ENCODE measurements at regions of chr11 and their contacts with region 1.

Region 1: DNA sequence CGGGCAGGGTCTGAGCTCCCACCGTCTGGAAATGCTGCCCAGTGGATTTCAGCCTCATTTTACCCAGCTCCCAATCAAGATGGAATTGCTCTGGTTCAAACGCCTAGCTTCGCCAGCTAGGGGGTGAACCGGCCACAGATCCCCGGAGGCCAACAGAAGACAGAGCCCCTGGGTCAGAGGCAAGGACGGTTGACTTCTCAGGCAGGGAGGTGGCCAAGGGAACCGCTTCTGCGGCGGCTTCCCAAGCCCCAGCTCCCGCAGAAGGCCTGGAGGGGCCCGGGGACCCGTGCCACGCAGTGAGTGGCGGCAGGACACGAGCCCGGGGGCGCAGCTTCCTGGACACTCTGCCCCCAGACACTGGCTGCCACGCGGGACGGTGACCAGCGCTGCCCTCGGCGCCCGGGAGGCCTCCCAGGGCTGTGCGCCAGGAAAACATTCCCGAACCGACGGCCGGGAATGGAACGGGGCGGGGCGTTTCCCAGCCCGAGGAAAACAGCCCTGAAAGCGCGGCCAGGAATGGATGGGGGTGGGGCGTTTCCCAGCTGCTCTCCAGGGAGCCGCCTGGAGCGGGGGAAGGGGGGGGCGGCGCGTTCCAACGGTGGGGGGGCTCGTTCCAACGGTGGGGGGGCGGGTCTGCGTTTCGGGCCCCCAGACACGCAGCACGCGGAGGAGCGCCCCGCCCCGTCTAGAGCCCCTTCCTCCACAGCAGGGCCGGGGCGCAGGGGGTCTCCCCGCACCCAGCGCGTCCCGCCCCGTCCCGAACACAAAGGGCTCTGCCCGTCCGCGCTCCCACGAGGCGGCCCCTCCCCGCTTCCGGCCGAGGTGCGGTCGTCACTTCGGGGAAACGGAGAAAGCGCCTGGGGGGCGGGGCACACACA is 13.5 kb upstream of the B4GALNT4 start:
- DNase-seq: peak; percentile 81 to 93 (median 88)
- ATAC-seq: peak; percentile 65 to 80
- H3K4me3 Mint-ChIP-seq: peak overlapping the region in 8 of 10 donors; percentile 78 to 93 (median 88)
- H3K27ac Mint-ChIP-seq: peak overlapping the region in 9 of 10 donors; percentile 90 to 99 (median 96)
- H3K4me1 Mint-ChIP-seq: peaks cover 21 to 47% (median 41%) of the 10 kb centered on the region in 4 donors
- H3K27me3 Mint-ChIP-seq: no peaks in the 10 kb centered on the region

Region 2: DNA sequence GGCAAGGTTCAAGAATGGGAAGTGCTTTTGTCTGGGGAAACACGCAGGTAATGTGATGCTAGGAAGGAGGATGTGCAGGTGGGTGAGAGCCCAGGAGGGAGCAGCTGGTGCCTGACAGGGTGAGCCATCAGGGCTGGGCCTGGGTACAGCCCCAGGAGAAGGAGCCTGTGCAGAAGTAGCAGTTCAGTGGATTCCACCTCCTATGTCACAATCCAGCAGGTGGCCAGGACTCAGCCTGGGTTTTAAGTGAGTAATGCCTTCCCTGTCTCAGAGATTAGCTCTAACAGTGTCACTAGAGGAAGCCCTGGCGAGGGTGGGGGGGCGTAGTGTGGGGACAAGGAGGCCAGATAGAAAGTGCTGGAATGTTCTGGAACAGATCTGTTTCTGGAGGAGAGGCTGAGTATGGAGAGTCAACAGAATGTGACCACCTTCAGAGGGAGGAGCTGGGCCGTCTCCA is 140.2 kb before region 1 on chr11:
- POLR2A ChIA-PET with region 1: no interaction called
- DNase-seq: no peak
- ATAC-seq: peak in 1 of 2 donors; percentile 33
- H3K4me3 Mint-ChIP-seq: no peak overlapping the region
- H3K27ac Mint-ChIP-seq: peak overlapping the region in 7 of 10 donors; percentile 8 to 84 (median 40)
- H3K4me1 Mint-ChIP-seq: peaks cover 0 to 12% (median 7%) of the 10 kb centered on the region in 4 donors
- H3K27me3 Mint-ChIP-seq: no peaks in the 10 kb centered on the region

Region 3: GRCh38 chr11:269146-269890 is 86.5 kb before region 1 on chr11:
- POLR2A ChIA-PET with region 1: interaction called, 23 read pairs
- DNase-seq: peak in 9 of 10 donors; percentile 49 to 91 (median 74)
- ATAC-seq: peak; percentile 55 to 79
- H3K4me3 Mint-ChIP-seq: peak overlapping the region; percentile 84 to 94 (median 88)
- H3K27ac Mint-ChIP-seq: peak overlapping the region; percentile 96 to 99 (median 98)
- H3K4me1 Mint-ChIP-seq: peaks cover 11 to 42% (median 36%) of the 10 kb centered on the region in 4 donors
- H3K27me3 Mint-ChIP-seq: no peaks in the 10 kb centered on the region

Region 4: GRCh38 chr11:288328-289144 is 67.3 kb before region 1 on chr11 and contains the start of gene PGGHG:
- POLR2A ChIA-PET with region 1: interaction called, 22 read pairs
- DNase-seq: peak in 9 of 10 donors; percentile 2 to 75 (median 58)
- ATAC-seq: peak; percentile 17 to 28
- H3K4me3 Mint-ChIP-seq: peak within 1 kb of the TSS; percentile 93 to 100 (median 97)
- H3K27ac Mint-ChIP-seq: peak within 1 kb of the TSS; percentile 93 to 99 (median 98)
- H3K4me1 Mint-ChIP-seq: peaks cover 27 to 56% (median 41%) of the 10 kb centered on the region in 4 donors
- H3K27me3 Mint-ChIP-seq: no peaks in the 10 kb centered on the region
- polyA plus RNA-seq, gene PGGHG: 8.1 to 14.9 (median 11.2) TPM

Region 5: GRCh38 chr11:313787-314547 is 41.9 kb before region 1 on chr11 and contains the start of gene IFITM1:
- POLR2A ChIA-PET with region 1: interaction called, 57 read pairs
- DNase-seq: peak in 9 of 10 donors; percentile 55 to 90 (median 82)
- ATAC-seq: peak; percentile 56 to 78
- H3K4me3 Mint-ChIP-seq: peak within 1 kb of the TSS; percentile 88 to 100 (median 97)
- H3K27ac Mint-ChIP-seq: peak within 1 kb of the TSS; percentile 94 to 99 (median 99)
- H3K4me1 Mint-ChIP-seq: peaks cover 30 to 50% (median 40%) of the 10 kb centered on the region in 4 donors
- H3K27me3 Mint-ChIP-seq: no peaks in the 10 kb centered on the region
- polyA plus RNA-seq, gene IFITM1: 1,833 to 2,198 (median 2,135) TPM

Region 6: DNA sequence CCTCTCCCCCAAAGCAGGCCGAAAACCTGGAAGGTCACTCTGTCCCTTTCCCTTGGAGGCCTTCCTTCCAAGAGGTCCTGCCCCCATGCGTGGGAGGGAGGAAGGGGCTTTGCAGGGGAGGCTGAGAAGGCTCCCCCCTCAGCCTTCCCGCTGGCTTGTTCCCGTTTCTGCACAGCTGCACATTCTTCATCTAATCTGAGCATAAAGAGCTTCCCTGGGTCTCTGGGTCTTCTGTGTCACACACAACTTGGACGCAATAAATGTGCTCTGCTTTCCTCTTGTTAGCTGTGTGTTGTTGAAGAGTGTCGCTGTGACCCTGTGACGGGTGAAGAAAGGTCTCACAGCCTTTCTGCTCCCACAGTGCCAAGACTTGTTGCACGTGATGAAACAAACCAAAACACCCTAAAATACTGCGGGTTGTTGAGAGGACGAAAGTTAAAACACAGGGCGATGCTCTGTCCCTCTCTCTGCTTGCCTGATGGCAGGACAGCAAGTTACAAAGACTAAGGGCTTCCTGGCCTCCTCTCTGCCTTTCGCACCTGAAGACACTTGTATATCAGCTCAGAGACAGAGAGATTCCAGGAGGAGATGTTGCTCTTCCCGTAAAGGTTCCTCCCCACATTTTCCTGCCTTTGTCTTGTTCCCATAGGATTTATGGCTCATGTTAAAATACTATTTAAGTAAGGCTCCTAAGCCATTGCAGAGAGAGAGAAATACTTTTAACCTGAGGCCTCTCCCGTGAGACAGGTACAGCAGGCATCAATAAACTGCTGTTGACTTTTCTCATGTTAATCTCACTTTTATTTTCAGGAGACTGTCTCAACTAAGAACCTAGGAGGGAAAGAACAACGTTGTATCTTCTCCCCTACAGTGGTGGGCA is 19.8 kb before region 1 on chr11:
- POLR2A ChIA-PET with region 1: interaction called, 38 read pairs
- DNase-seq: no peak
- ATAC-seq: peak in 1 of 2 donors; percentile 27
- H3K4me3 Mint-ChIP-seq: peak overlapping the region in 7 of 10 donors; percentile 12 to 75 (median 45)
- H3K27ac Mint-ChIP-seq: peak overlapping the region; percentile 10 to 88 (median 70)
- H3K4me1 Mint-ChIP-seq: peaks cover 24 to 62% (median 50%) of the 10 kb centered on the region in 4 donors
- H3K27me3 Mint-ChIP-seq: no peaks in the 10 kb centered on the region

Region 7: GRCh38 chr11:370087-371055 is 14.6 kb after region 1 on chr11:
- POLR2A ChIA-PET with region 1: no interaction called
- DNase-seq: peak in 1 of 10 donors; percentile 61
- ATAC-seq: no peak
- H3K4me3 Mint-ChIP-seq: peak overlapping the region; percentile 48 to 83 (median 68)
- H3K27ac Mint-ChIP-seq: peak overlapping the region in 5 of 10 donors; percentile 37 to 53 (median 44)
- H3K4me1 Mint-ChIP-seq: peaks cover 15 to 34% (median 23%) of the 10 kb centered on the region in 4 donors
- H3K27me3 Mint-ChIP-seq: peaks cover 16 to 54% (median 20%) of the 10 kb centered on the region in 5 donors

Region 8: GRCh38 chr11:382081-382629 is 26.3 kb after region 1 on chr11:
- POLR2A ChIA-PET with region 1: no interaction called
- DNase-seq: no peak
- ATAC-seq: peak; percentile 33 to 53
- H3K4me3 Mint-ChIP-seq: peak overlapping the region in 4 of 10 donors; percentile 3 to 45 (median 36)
- H3K27ac Mint-ChIP-seq: peak overlapping the region in 7 of 10 donors; percentile 31 to 85 (median 40)
- H3K4me1 Mint-ChIP-seq: peaks cover 5 to 11% (median 7%) of the 10 kb centered on the region in 4 donors
- H3K27me3 Mint-ChIP-seq: peaks cover 0 to 11% (median 2%) of the 10 kb centered on the region in 5 donors

Region 9: GRCh38 chr11:396948-397548 is 41.2 kb after region 1 on chr11:
- POLR2A ChIA-PET with region 1: no interaction called
- DNase-seq: peak in 6 of 10 donors; percentile 29 to 54 (median 45)
- ATAC-seq: peak; percentile 78 to 92
- H3K4me3 Mint-ChIP-seq: peak overlapping the region in 5 of 10 donors; percentile 14 to 59 (median 38)
- H3K27ac Mint-ChIP-seq: no peak overlapping the region
- H3K4me1 Mint-ChIP-seq: peaks cover 0 to 6% (median 4%) of the 10 kb centered on the region in 4 donors
- H3K27me3 Mint-ChIP-seq: peaks cover 0 to 4% (median 0%) of the 10 kb centered on the region in 5 donors

Region 10: GRCh38 chr11:406978-407739 is 51.3 kb after region 1 on chr11:
- POLR2A ChIA-PET with region 1: interaction called, 19 read pairs
- DNase-seq: peak; percentile 62 to 98 (median 95)
- ATAC-seq: peak; percentile 90 to 95
- H3K4me3 Mint-ChIP-seq: peak overlapping the region in 7 of 10 donors; percentile 22 to 76 (median 58)
- H3K27ac Mint-ChIP-seq: peak overlapping the region in 9 of 10 donors; percentile 43 to 93 (median 79)
- H3K4me1 Mint-ChIP-seq: peaks cover 7 to 31% (median 15%) of the 10 kb centered on the region in 4 donors
- H3K27me3 Mint-ChIP-seq: no peaks in the 10 kb centered on the region